ENCODE measurements at regions of chr10 and their contacts with region 1.

Region 1: GRCh38 chr10:110311357-110311949 is 6.7 kb upstream of the SMNDC1 start:
- DNase-seq: no peak
- H3K4me3 ChIP-seq: no peak overlapping the region
- H3K27ac ChIP-seq: no peak overlapping the region
- H3K4me1 ChIP-seq: peaks cover 13% of the 10 kb centered on the region
- H3K27me3 ChIP-seq: no peaks in the 10 kb centered on the region
- CTCF ChIP-seq: peak; percentile 73

Region 2: DNA sequence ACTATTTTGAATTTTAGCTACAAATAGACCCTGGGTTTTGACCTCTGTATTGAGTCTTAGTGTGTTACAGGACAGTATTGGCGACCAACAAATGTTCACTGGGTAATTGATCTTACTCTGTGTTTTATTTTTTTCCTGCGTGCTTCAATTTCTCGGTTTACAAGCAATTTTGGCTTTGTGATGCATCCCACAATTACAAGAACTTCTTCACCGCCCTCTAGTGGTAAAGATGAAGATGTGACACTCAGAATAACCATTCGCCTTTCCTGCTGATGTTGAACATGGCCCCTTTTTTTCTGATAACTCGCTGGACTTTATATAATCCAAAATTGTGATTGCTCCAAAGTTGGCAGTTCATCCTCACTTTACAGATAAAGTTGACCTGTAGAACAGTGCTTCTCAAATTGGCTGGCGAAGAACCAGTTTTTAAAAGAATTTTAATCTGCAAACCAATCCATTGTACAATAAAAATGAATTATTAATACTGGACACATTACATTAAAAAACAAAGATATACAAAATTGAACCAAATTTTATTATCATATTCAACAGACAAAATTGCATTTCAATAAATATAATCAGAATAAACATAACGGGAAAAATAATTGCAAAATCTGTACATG is 235.8 kb after region 1 on chr10:
- intact Hi-C with region 1: loop called (anchors 2 kb)
- DNase-seq: no peak
- H3K4me3 ChIP-seq: no peak overlapping the region
- H3K27ac ChIP-seq: no peak overlapping the region
- H3K4me1 ChIP-seq: peaks cover 12% of the 10 kb centered on the region
- H3K27me3 ChIP-seq: no peaks in the 10 kb centered on the region
- CTCF ChIP-seq: peak; percentile 87

Measured in left ventricle myocardium inferior (tissue), 1 donor.